AG04449 (cell line): ENCODE measurements at regions of chr6 and their contacts with region 1.

Region 1: DNA sequence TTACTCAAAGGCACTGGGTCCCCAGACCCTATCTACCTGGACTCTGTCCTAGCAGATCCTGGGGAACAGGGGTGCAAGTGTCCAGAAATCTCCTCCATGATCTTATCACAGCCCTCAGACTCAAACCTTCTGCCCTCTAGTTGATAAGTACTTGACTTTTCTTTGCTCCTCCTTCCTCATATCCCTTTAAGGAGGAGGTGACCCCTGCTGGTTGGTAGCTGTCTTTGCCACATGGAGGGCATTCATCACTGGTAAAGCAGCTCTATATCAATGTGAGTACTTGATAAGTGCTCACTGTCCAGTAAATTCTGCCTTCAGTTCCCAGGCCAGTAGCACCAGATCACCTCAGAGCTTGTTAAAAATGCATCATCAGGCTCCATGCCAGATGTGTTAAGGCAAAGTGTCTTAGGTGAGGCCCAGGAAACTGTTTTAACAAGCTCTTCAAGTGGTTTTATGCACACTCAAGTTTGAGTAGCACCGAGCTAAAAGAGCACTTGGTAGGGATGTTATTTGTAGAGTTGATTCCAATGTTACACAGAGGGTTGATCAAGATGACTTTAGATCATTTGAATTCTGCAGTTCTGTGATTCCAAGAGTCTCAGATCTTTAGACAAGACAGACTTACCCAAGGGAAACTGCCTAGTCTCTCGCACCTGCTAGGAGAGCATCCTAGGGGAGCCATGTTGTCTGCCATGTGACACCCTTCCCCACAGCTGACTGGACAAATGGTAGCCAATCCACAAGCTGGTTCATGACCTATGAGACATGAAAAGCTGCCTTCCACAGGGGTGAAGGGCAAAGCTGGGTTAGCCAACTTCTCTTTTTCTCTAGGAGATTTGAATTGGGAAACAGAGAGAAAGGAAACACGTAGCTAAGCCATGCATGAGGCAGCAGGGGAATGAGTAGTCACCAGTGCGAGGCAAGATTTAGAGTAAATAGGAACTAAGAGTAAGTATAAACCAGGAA is 18.6 kb downstream of the TREML2 start:
- DNase-seq: peak; percentile 28
- H3K4me3 ChIP-seq: no peak overlapping the region
- CTCF ChIP-seq: peak; percentile 72

Region 2: GRCh38 chr6:41092421-41093140 is 89.8 kb before region 1 on chr6:
- CTCF ChIA-PET with region 1: interaction called, 63 read pairs
- POLR2A ChIA-PET with region 1: no interaction called
- DNase-seq: no peak
- H3K4me3 ChIP-seq: no peak overlapping the region
- CTCF ChIP-seq: peak; percentile 43

Region 3: DNA sequence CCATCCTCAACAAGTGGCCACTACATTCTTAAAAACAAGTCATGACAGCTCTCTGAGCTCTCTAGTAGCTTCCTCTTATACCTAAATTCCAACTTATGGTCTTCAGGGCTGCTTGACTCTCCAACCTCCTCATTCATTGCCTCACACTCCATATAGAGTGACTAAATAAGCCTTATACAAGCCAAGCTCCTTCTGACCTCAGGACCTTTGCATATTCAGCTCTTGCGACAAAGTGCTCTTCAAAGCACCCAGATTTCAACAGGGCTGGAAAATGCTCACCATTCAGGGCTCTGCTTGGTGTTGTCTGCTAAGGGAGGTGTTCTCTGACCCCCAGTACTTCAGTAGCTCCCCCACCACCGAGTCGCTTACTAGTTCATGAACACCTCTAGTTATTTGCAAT is 14.9 kb after region 1 on chr6:
- CTCF ChIA-PET with region 1: interaction called, 15 read pairs
- POLR2A ChIA-PET with region 1: no interaction called
- DNase-seq: no peak
- H3K4me3 ChIP-seq: no peak overlapping the region
- CTCF ChIP-seq: no peak